Transverse colon (tissue), 4 donors: ENCODE measurements at regions of chr16 and their contacts with region 1.

Region 1: GRCh38 chr16:17744903-17745575 is 274.3 kb upstream of the XYLT1 start:
- DNase-seq: no peak
- H3K4me3 ChIP-seq: peak overlapping the region in 3 of 4 donors; percentile 6 to 33 (median 8)
- H3K27ac ChIP-seq: peak overlapping the region; percentile 62 to 83 (median 71)
- H3K4me1 ChIP-seq: peaks cover 0 to 3% (median 0%) of the 10 kb centered on the region in 4 donors
- H3K27me3 ChIP-seq: peaks cover 6% of the 10 kb centered on the region
- CTCF ChIP-seq: no peak
- EP300 ChIP-seq: no peak
- POLR2A ChIP-seq: no peak

Region 2: GRCh38 chr16:17633104-17633951 is 111.7 kb before region 1 on chr16:
- in situ Hi-C with region 1: loop called in 1 of 4 experiments (anchors 25 kb)
- intact Hi-C with region 1: no loop called
- DNase-seq: no peak
- H3K4me3 ChIP-seq: no peak overlapping the region
- H3K27ac ChIP-seq: no peak overlapping the region
- H3K4me1 ChIP-seq: no peaks in the 10 kb centered on the region
- H3K27me3 ChIP-seq: peaks cover 4% of the 10 kb centered on the region
- CTCF ChIP-seq: no peak
- EP300 ChIP-seq: no peak
- POLR2A ChIP-seq: no peak